ENCODE measurements at regions of chr1 and their contacts with region 1.

Region 1: DNA sequence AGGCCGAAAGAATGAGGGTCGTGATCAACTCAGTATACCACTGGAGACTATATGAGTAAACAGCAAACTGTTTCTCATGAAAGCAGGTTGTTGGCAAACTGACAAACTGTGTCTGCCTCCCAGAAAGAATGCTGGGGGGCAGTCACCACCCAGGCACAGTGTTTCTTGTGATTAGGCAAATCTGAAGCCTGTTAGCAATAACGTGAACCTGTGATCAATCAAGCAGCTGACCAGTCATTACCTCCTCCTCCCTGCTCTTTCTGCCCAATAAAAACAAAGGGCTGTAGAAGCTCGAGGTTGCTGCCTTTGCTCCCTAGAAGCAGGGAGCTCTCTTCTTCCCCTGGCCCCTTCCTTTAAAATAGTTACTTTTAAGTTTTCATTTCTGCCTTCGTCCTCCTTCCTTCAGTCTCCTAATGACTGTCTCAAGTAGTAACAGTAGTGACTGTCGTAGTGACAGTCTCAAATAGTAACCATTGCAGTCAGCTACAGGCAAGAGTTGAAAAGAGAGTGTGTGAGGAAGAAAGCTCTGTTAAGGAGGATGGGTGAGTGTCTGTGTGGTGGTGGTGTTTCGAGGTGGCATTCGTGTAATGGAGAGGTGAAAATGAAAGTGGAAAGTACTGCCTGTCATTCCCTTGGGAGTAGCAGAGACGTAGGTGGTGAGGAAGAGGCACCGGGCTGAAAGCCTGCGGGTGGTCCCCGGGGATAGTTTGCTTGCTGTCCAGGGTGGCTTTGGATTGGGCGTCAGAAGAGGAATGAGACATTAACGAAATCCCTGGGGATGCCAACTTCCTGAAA is 14.5 kb downstream of the HHAT start:
- DNase-seq: no peak
- H3K4me3 Mint-ChIP-seq: no peak overlapping the region
- H3K27ac Mint-ChIP-seq: no peak overlapping the region
- H3K4me1 Mint-ChIP-seq: peaks cover 26% of the 10 kb centered on the region
- H3K27me3 Mint-ChIP-seq: peaks cover under 1% of the 10 kb centered on the region

Region 2: GRCh38 chr1:209761011-209761635 is 582.1 kb before region 1 on chr1:
- intact Hi-C with region 1: loop called (anchors 5 kb)
- DNase-seq: no peak
- H3K4me3 Mint-ChIP-seq: peak overlapping the region; percentile 79
- H3K27ac Mint-ChIP-seq: peak overlapping the region; percentile 84
- H3K4me1 Mint-ChIP-seq: peaks cover 64% of the 10 kb centered on the region
- H3K27me3 Mint-ChIP-seq: no peaks in the 10 kb centered on the region

Region 3: GRCh38 chr1:210272666-210273065 is 70.5 kb before region 1 on chr1:
- intact Hi-C with region 1: no loop called
- DNase-seq: no peak
- H3K4me3 Mint-ChIP-seq: no peak overlapping the region
- H3K27ac Mint-ChIP-seq: no peak overlapping the region
- H3K4me1 Mint-ChIP-seq: no peaks in the 10 kb centered on the region
- H3K27me3 Mint-ChIP-seq: peaks cover 4% of the 10 kb centered on the region

Region 4: GRCh38 chr1:210332719-210333398 is 10.3 kb before region 1 on chr1:
- intact Hi-C with region 1: loop called (anchors 1 kb)
- DNase-seq: peak; percentile 60
- H3K4me3 Mint-ChIP-seq: peak overlapping the region; percentile 8
- H3K27ac Mint-ChIP-seq: no peak overlapping the region
- H3K4me1 Mint-ChIP-seq: peaks cover 31% of the 10 kb centered on the region
- H3K27me3 Mint-ChIP-seq: peaks cover 25% of the 10 kb centered on the region

Region 5: GRCh38 chr1:210373885-210374599 is 30.9 kb after region 1 on chr1:
- intact Hi-C with region 1: loop called (anchors 2 kb)
- DNase-seq: peak; percentile 48
- H3K4me3 Mint-ChIP-seq: no peak overlapping the region
- H3K27ac Mint-ChIP-seq: peak overlapping the region; percentile 32
- H3K4me1 Mint-ChIP-seq: peaks cover 10% of the 10 kb centered on the region
- H3K27me3 Mint-ChIP-seq: peaks cover 22% of the 10 kb centered on the region

Region 6: GRCh38 chr1:210464519-210465039 is 121.4 kb after region 1 on chr1:
- intact Hi-C with region 1: loop called (anchors 2 kb)
- DNase-seq: peak; percentile 9
- H3K4me3 Mint-ChIP-seq: no peak overlapping the region
- H3K27ac Mint-ChIP-seq: no peak overlapping the region
- H3K4me1 Mint-ChIP-seq: peaks cover 17% of the 10 kb centered on the region
- H3K27me3 Mint-ChIP-seq: peaks cover 56% of the 10 kb centered on the region

Region 7: GRCh38 chr1:210568631-210569030 is 225.4 kb after region 1 on chr1:
- intact Hi-C with region 1: no loop called
- DNase-seq: no peak
- H3K4me3 Mint-ChIP-seq: no peak overlapping the region
- H3K27ac Mint-ChIP-seq: no peak overlapping the region
- H3K4me1 Mint-ChIP-seq: no peaks in the 10 kb centered on the region
- H3K27me3 Mint-ChIP-seq: peaks cover 3% of the 10 kb centered on the region